ENCODE measurements at regions of chr15 and their contacts with region 1.

Region 1: DNA sequence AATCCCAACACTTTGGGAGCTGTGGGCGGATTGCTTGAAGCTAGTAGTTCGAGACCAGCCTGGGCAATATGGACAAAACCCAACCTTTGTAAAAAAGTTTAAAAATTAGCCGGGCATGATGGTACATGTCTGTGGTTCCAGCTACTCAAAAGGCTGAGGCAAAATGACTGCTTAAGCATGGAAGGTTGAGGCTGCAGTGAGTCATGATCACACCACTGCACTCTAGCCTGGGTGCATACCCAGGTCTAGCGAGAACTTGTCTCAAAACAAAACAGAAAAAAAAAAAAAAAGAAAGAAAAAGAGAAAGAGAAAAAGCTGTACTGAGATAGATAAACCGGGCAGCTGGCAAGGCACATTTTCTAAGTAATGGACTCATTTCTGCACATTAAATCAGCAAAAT is 10.6 kb downstream of the ARPP19 start:
- DNase-seq: peak; percentile 84
- H3K4me3 Mint-ChIP-seq: peak overlapping the region; percentile 37
- H3K27ac Mint-ChIP-seq: peak overlapping the region; percentile 97
- H3K4me1 Mint-ChIP-seq: peaks cover 72% of the 10 kb centered on the region
- H3K27me3 Mint-ChIP-seq: no peaks in the 10 kb centered on the region

Region 2: GRCh38 chr15:50908210-50909009 is 1649.8 kb before region 1 on chr15 and contains the start of gene AP4E1:
- CTCF ChIA-PET with region 1: no interaction called
- POLR2A ChIA-PET with region 1: no interaction called
- intact Hi-C with region 1: loop called (anchors 5 kb)
- DNase-seq: peak; percentile 96
- H3K4me3 Mint-ChIP-seq: peak within 1 kb of the TSS; percentile 93
- H3K27ac Mint-ChIP-seq: peak within 1 kb of the TSS; percentile 98
- H3K4me1 Mint-ChIP-seq: peaks cover 22% of the 10 kb centered on the region
- H3K27me3 Mint-ChIP-seq: no peaks in the 10 kb centered on the region
- total RNA-seq, gene AP4E1: 12.0 to 12.7 TPM

Region 3: GRCh38 chr15:52261498-52262242 is 296.5 kb before region 1 on chr15:
- CTCF ChIA-PET with region 1: interaction called, 3 read pairs
- POLR2A ChIA-PET with region 1: interaction called, 10 read pairs
- intact Hi-C with region 1: loop called (anchors 1 kb)
- DNase-seq: peak; percentile 87
- H3K4me3 Mint-ChIP-seq: peak overlapping the region; percentile 32
- H3K27ac Mint-ChIP-seq: peak overlapping the region; percentile 80
- H3K4me1 Mint-ChIP-seq: peaks cover 36% of the 10 kb centered on the region
- H3K27me3 Mint-ChIP-seq: no peaks in the 10 kb centered on the region

Region 4: GRCh38 chr15:52466134-52466701 is 92.0 kb before region 1 on chr15:
- CTCF ChIA-PET with region 1: interaction called, 6 read pairs
- POLR2A ChIA-PET with region 1: interaction called, 12 read pairs
- intact Hi-C with region 1: loop called (anchors 1 kb)
- DNase-seq: peak; percentile 84
- H3K4me3 Mint-ChIP-seq: no peak overlapping the region
- H3K27ac Mint-ChIP-seq: peak overlapping the region; percentile 73
- H3K4me1 Mint-ChIP-seq: peaks cover 46% of the 10 kb centered on the region
- H3K27me3 Mint-ChIP-seq: no peaks in the 10 kb centered on the region

Region 5: DNA sequence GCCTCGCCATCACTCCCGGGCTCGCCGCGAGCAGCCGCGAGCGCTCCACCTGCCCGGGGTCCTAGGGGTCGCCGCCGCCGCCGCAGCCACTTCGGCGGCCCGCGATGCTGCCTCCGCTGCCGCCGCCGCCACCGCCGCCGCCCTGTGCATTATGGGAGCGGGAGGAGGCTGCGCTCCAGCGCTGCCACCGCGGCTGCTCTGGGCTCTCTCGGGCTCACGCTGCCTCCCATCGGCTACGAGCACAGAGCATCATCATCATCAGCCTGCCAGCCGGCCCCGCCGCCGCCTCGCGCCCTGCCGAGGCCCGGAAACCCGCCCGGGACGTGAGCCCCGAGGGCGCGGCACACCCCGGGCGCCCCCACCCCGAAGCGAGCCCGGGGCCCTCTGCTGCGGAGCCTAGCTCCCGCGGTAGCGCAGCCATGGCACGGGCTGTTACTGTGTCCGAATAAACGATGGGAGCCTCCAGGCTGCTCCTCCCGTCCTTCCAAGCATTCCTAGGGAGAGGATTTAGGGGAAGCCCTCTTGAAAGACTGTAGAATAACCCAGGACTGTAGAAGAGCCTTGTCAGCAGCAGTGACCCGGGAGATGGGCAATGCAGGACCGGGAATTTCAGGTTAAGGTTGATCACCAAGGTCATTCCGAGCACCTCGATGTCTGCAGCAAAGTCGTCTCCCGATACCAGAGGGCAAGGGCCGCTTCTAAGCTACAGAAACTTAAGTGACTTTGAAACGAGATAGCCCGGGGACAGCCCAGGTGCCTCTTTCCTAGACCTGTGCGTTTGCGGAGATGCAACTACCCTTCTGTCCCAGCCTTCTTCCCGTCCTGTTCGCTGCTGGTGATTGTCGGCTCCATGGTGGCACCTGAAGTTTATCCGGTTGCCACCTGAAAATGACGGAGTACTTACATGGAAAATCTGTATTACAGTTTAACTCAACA is 28.9 kb before region 1 on chr15:
- CTCF ChIA-PET with region 1: interaction called, 19 read pairs
- POLR2A ChIA-PET with region 1: interaction called, 11 read pairs
- intact Hi-C with region 1: loop called (anchors 1 kb)
- DNase-seq: peak; percentile 86
- H3K4me3 Mint-ChIP-seq: peak overlapping the region; percentile 78
- H3K27ac Mint-ChIP-seq: peak overlapping the region; percentile 75
- H3K4me1 Mint-ChIP-seq: peaks cover 33% of the 10 kb centered on the region
- H3K27me3 Mint-ChIP-seq: peaks cover 2% of the 10 kb centered on the region

Region 6: GRCh38 chr15:52658955-52659354 is 100.8 kb after region 1 on chr15:
- CTCF ChIA-PET with region 1: interaction called, 6 read pairs
- POLR2A ChIA-PET with region 1: no interaction called
- intact Hi-C with region 1: loop called (anchors 1 kb)
- DNase-seq: peak; percentile 64
- H3K4me3 Mint-ChIP-seq: no peak overlapping the region
- H3K27ac Mint-ChIP-seq: peak overlapping the region; percentile 12
- H3K4me1 Mint-ChIP-seq: peaks cover 30% of the 10 kb centered on the region
- H3K27me3 Mint-ChIP-seq: no peaks in the 10 kb centered on the region

Measured in activated CD4-positive, alpha-beta memory T cell treated with anti-CD3 and anti-CD28 coated beads for 36 hours (primary cell).